ENCODE measurements at regions of chr11 and their contacts with region 1.

Region 1: GRCh38 chr11:12963792-12964536 is 45.2 kb upstream of the RASSF10 start:
- DNase-seq: peak; percentile 73
- H3K4me3 ChIP-seq: no peak overlapping the region
- H3K27ac ChIP-seq: no peak overlapping the region
- H3K4me1 ChIP-seq: no peaks in the 10 kb centered on the region
- H3K27me3 ChIP-seq: no peaks in the 10 kb centered on the region
- CTCF ChIP-seq: peak; percentile 50 to 90 (median 79)
- EP300 ChIP-seq: no peak
- POLR2A ChIP-seq: no peak

Region 2: DNA sequence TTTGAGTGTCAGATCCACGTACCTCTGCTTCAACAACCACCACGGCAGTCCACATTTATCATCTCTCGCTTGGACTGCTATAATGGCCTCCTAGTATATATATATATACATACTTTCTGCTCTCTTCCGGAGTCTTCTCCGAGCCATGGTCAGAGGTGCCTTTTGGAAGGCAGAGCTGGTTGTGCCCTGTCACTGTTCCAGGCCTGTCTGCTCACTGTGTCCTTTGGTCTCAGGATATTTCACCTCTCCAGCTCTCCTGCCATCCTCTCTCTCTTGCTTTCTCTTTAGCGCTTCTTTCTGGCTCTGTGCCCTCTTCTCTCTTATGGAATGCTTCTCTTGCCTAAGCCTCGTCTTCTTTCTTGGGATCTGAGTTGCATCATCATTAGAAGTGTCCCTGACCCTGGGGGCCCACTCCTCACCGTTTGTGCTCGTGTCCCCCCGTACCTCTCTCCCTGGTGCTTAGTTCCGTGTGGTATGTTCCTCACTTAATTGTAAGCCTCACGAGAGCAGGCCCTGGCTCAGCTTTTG is 40.9 kb before region 1 on chr11:
- intact Hi-C with region 1: no loop called
- DNase-seq: no peak
- H3K4me3 ChIP-seq: no peak overlapping the region
- H3K27ac ChIP-seq: no peak overlapping the region
- H3K4me1 ChIP-seq: peaks cover 0 to 6% (median 5%) of the 10 kb centered on the region in 4 donors
- H3K27me3 ChIP-seq: no peaks in the 10 kb centered on the region
- CTCF ChIP-seq: no peak
- EP300 ChIP-seq: no peak
- POLR2A ChIP-seq: no peak

Region 3: GRCh38 chr11:13073119-13073981 is 109.4 kb after region 1 on chr11:
- intact Hi-C with region 1: no loop called
- DNase-seq: no peak
- H3K4me3 ChIP-seq: no peak overlapping the region
- H3K27ac ChIP-seq: no peak overlapping the region
- H3K4me1 ChIP-seq: no peaks in the 10 kb centered on the region
- H3K27me3 ChIP-seq: peaks cover 0 to 6% (median 0%) of the 10 kb centered on the region in 3 donors
- CTCF ChIP-seq: no peak
- EP300 ChIP-seq: no peak
- POLR2A ChIP-seq: no peak

Region 4: GRCh38 chr11:13189561-13190426 is 225.8 kb after region 1 on chr11:
- intact Hi-C with region 1: loop called (anchors 5 kb)
- DNase-seq: no peak
- H3K4me3 ChIP-seq: no peak overlapping the region
- H3K27ac ChIP-seq: no peak overlapping the region
- H3K4me1 ChIP-seq: no peaks in the 10 kb centered on the region
- H3K27me3 ChIP-seq: no peaks in the 10 kb centered on the region
- CTCF ChIP-seq: no peak
- EP300 ChIP-seq: no peak
- POLR2A ChIP-seq: no peak

Region 5: GRCh38 chr11:13391217-13391616 is 427.3 kb after region 1 on chr11:
- intact Hi-C with region 1: no loop called
- DNase-seq: no peak
- H3K4me3 ChIP-seq: no peak overlapping the region
- H3K27ac ChIP-seq: no peak overlapping the region
- H3K4me1 ChIP-seq: peaks cover 0 to 8% (median 0%) of the 10 kb centered on the region in 4 donors
- H3K27me3 ChIP-seq: no peaks in the 10 kb centered on the region
- CTCF ChIP-seq: no peak
- EP300 ChIP-seq: no peak
- POLR2A ChIP-seq: no peak